ENCODE measurements at regions of chr11 and their contacts with region 1.

Region 1: DNA sequence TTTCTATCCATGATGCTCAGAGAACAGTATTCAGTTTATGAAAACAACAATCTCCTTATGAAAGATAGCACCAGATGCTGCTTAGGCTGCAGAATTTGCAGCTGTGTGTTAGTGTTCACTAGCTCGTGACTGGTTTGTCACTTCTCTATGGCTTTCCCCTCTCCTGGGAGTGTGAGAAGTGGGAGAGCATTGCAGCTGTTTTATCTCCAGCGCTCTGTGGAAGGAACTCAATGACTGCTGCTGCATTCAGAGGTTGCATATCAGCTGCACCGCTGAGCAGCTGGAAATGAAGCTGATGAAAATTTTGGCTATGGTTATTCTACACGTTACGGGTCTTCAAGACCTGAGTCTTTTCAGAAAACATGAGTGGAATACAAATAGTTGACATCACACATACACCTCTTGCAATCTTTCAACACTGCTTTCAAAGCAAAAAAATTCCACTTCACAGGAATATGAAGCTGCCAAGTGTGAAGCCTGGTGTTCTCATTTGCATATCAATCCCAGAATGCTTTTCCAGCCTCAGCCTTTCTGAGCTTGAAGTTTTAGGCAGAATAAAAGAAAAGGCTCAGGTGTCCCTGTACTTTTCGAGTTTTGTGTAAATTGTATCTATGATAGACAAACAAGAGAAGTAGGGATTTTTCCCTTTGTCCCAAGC is 149.3 kb upstream of the DDI1 start:
- DNase-seq: peak in 3 of 5 donors; percentile 13 to 35 (median 25)
- ATAC-seq: peak in 3 of 4 donors; percentile 44 to 79 (median 48)
- H3K4me3 ChIP-seq: no peak overlapping the region
- H3K27ac ChIP-seq: peak overlapping the region in 1 of 12 donors; percentile 40
- H3K4me1 ChIP-seq: peaks cover 0 to 5% (median 0%) of the 10 kb centered on the region in 12 donors
- H3K27me3 ChIP-seq: no peaks in the 10 kb centered on the region
- CTCF ChIP-seq: no peak
- POLR2A ChIP-seq: no peak

Region 2: DNA sequence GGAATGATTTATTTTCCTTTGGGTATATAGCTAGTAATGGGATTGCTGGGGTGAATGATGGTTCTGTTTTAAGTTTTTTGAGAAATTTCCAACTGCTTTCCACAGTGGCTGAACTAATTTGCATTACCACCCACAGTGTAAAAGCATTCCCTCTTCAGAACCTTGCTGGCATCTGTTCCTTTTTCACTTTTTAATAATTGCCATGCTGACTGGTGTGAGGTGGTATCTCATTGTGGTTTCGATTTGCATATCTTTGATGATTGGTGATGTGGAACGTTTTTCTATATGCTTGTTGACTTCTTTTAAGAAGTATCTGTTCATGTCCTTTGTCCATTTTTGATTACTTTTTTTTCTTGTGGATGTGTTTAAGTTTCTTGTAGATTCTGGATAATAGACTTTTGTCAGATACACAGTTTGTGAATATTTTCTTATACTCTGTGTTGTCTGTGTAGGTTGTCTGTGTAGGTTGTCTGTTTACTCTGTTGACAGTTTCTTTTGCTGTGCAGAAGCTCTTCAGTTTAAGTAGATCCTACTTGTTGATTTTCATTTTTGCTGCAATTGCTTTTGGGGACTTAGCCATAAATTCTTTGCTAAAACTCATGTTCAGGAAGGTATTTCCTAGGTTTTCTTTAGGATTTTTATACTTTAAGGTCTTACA is 142.5 kb before region 1 on chr11:
- intact Hi-C with region 1: no loop called
- DNase-seq: no peak
- ATAC-seq: no peak
- H3K4me3 ChIP-seq: no peak overlapping the region
- H3K27ac ChIP-seq: no peak overlapping the region
- H3K4me1 ChIP-seq: peaks cover 0 to 5% (median 0%) of the 10 kb centered on the region in 12 donors
- H3K27me3 ChIP-seq: no peaks in the 10 kb centered on the region
- CTCF ChIP-seq: no peak
- POLR2A ChIP-seq: no peak

Region 3: GRCh38 chr11:103844327-103845215 is 42.6 kb before region 1 on chr11:
- intact Hi-C with region 1: loop called in 1 of 10 experiments (anchors 5 kb)
- DNase-seq: no peak
- ATAC-seq: no peak
- H3K4me3 ChIP-seq: no peak overlapping the region
- H3K27ac ChIP-seq: no peak overlapping the region
- H3K4me1 ChIP-seq: peaks cover 0 to 17% (median 0%) of the 10 kb centered on the region in 12 donors
- H3K27me3 ChIP-seq: no peaks in the 10 kb centered on the region
- CTCF ChIP-seq: no peak
- POLR2A ChIP-seq: no peak

Region 4: DNA sequence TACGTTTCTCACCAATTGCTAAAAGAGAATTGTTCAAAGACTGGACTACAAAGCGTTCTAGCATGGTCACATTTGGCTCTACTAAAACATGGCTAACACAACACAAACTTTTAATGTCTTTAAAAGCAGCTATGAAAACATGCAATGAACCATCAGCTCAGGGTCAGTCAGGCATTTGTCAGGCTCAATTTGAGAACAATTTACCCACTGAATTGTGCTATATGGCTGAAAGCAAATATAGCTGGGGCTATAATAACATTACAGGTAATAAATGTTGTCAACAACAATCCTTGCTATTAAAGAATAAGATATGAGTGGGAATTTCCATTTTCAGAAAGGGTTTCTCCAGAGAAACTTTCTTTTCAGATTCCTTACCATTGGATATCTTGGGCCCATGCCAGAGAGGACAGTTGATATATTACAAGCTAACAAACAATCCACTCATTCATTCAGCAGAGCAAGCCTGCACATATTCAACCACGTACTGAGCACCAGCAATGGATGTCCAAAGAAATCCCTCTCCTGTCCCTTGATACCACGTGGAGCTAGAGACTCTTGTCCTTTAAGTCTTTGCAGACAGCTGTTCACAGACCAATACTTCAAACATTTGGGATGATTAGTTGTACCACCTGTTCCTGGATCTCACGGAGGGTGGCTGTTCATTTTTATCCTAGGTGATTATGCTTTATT is 66.8 kb after region 1 on chr11:
- intact Hi-C with region 1: no loop called
- DNase-seq: no peak
- ATAC-seq: no peak
- H3K4me3 ChIP-seq: no peak overlapping the region
- H3K27ac ChIP-seq: no peak overlapping the region
- H3K4me1 ChIP-seq: peaks cover 0 to 3% (median 0%) of the 10 kb centered on the region in 12 donors
- H3K27me3 ChIP-seq: no peaks in the 10 kb centered on the region
- CTCF ChIP-seq: no peak
- POLR2A ChIP-seq: no peak

Measured in heart left ventricle (tissue), 16 donors.